ENCODE measurements at regions of chr4 and their contacts with region 1.

Region 1: DNA sequence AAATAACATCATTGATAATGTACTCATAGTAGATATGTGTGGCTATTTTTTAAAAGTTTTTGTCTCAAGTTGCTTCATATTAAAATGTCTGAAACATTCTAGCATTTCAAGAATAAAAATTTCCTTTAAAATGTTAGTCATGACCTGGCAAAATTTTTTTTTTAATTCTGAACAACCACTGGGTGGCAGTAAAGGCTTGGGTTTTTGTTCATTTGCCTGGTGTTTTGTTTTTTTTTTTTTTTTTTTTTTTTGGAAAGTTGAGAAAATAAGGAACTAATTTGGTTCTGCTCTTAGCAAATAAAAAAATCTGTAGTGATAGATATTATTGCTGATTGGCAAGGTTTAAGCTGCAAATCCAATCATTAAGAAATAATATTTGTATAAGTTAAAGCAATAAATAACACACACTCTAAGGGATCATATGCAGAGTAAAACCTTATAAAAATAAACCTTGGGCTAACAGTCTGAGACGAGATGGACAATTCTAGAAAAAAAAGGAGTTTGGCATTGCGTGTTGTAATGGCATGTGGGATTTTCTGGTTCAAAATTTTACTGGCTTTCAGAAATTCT is 81.4 kb downstream of the CEP44 start:
- DNase-seq: no peak
- ATAC-seq: no peak
- H3K4me3 ChIP-seq: no peak overlapping the region
- H3K27ac ChIP-seq: no peak overlapping the region
- H3K4me1 ChIP-seq: no peaks in the 10 kb centered on the region
- H3K27me3 ChIP-seq: no peaks in the 10 kb centered on the region

Region 2: DNA sequence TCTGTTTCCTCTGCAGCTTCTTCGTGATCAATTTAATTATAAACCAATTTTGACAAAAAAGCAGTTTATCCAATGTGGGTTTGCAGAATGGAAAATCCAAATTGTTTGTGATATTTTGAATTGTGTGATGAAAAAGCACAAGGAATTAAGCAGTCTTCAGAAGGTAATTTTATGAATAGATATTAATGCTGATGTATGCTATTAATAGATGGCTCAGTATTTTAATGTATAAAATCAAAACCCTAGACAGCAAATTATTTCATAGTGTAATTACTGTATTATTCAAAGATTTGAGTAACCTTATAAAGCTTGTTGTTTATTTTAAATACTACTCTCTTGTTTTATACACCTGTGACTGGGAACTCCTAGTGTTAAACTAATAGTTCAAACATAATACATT is 61.4 kb before region 1 on chr4:
- intact Hi-C with region 1: no loop called
- DNase-seq: no peak
- ATAC-seq: no peak
- H3K4me3 ChIP-seq: no peak overlapping the region
- H3K27ac ChIP-seq: no peak overlapping the region
- H3K4me1 ChIP-seq: no peaks in the 10 kb centered on the region
- H3K27me3 ChIP-seq: no peaks in the 10 kb centered on the region

Region 3: GRCh38 chr4:174631901-174632758 is 267.0 kb after region 1 on chr4:
- intact Hi-C with region 1: loop called (anchors 2 kb)
- DNase-seq: no peak
- ATAC-seq: no peak
- H3K4me3 ChIP-seq: no peak overlapping the region
- H3K27ac ChIP-seq: no peak overlapping the region
- H3K4me1 ChIP-seq: no peaks in the 10 kb centered on the region
- H3K27me3 ChIP-seq: no peaks in the 10 kb centered on the region